Natural killer cell (primary cell): ENCODE measurements at regions of chr9 and their contacts with region 1.

Region 1: DNA sequence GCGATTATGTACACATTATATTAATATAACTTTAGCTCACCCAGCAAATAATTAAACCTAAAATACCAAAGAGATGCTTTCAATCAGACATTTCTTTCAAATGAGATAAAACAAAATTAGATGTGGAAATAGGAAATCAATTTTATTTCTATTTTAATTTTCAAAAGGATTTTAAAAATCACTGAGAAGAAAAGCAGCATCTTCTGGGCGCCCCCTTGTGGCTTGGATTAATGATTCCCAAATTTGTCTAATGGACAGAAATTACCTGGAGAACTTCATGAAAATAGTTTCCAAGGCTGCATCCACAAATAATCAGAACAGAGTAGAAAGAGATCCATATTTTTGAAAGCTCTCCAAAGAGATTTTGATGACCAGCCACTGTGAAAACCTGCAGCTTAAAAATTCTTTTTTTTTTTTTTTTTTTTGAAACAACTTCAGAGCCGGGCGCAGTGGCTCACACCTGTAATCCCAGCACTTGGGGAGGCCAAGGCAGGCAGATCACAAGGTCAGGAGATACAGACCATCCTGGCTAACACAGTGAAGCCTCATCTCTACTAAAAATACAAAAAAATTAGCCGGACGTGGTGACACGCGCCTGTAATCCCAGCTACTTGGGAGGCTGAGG is 50.9 kb upstream of the CEMIP2 start:
- DNase-seq: peak in 1 of 2 donors; percentile 80
- ATAC-seq: no peak
- H3K4me3 ChIP-seq: no peak overlapping the region
- H3K4me3 Mint-ChIP-seq: no peak overlapping the region
- H3K27ac ChIP-seq: no peak overlapping the region
- H3K27ac Mint-ChIP-seq: no peak overlapping the region
- H3K4me1 ChIP-seq: peaks cover 4% of the 10 kb centered on the region
- H3K4me1 Mint-ChIP-seq: peaks cover 10 to 15% of the 10 kb centered on the region in 2 donors
- H3K27me3 ChIP-seq: no peaks in the 10 kb centered on the region
- H3K27me3 Mint-ChIP-seq: no peaks in the 10 kb centered on the region
- CTCF ChIP-seq: peak; percentile 89

Region 2: GRCh38 chr9:71741711-71742648 is 77.2 kb before region 1 on chr9:
- intact Hi-C with region 1: loop called (anchors 5 kb)
- DNase-seq: no peak
- ATAC-seq: no peak
- H3K4me3 ChIP-seq: no peak overlapping the region
- H3K4me3 Mint-ChIP-seq: no peak overlapping the region
- H3K27ac ChIP-seq: no peak overlapping the region
- H3K27ac Mint-ChIP-seq: peak overlapping the region; percentile 21 to 72
- H3K4me1 ChIP-seq: no peaks in the 10 kb centered on the region
- H3K4me1 Mint-ChIP-seq: peaks cover 27% of the 10 kb centered on the region in 2 donors
- H3K27me3 ChIP-seq: no peaks in the 10 kb centered on the region
- H3K27me3 Mint-ChIP-seq: no peaks in the 10 kb centered on the region
- CTCF ChIP-seq: no peak

Region 3: DNA sequence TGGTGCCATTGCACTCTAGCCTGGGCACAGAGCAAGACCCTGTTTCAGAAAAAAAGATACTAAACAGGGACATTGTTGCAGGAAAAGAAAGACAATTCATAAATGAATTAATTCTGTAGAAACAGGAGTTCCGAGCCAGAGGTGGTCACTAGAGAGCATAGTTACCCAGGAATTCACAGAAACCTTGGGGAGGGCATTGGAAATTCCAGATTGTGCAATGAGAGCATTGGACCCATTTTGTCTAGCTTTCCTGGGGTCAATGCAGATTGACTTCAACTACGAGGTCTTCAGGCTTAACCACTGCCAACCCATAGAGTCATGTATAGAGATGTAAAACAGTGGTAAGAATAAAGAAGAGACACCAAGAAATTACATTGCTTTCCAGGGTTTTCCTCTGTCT is 28.7 kb after region 1 on chr9:
- intact Hi-C with region 1: no loop called
- DNase-seq: no peak
- ATAC-seq: no peak
- H3K4me3 ChIP-seq: no peak overlapping the region
- H3K4me3 Mint-ChIP-seq: no peak overlapping the region
- H3K27ac ChIP-seq: no peak overlapping the region
- H3K27ac Mint-ChIP-seq: no peak overlapping the region
- H3K4me1 ChIP-seq: no peaks in the 10 kb centered on the region
- H3K4me1 Mint-ChIP-seq: no peaks in the 10 kb centered on the region
- H3K27me3 ChIP-seq: no peaks in the 10 kb centered on the region
- H3K27me3 Mint-ChIP-seq: no peaks in the 10 kb centered on the region
- CTCF ChIP-seq: no peak

Region 4: DNA sequence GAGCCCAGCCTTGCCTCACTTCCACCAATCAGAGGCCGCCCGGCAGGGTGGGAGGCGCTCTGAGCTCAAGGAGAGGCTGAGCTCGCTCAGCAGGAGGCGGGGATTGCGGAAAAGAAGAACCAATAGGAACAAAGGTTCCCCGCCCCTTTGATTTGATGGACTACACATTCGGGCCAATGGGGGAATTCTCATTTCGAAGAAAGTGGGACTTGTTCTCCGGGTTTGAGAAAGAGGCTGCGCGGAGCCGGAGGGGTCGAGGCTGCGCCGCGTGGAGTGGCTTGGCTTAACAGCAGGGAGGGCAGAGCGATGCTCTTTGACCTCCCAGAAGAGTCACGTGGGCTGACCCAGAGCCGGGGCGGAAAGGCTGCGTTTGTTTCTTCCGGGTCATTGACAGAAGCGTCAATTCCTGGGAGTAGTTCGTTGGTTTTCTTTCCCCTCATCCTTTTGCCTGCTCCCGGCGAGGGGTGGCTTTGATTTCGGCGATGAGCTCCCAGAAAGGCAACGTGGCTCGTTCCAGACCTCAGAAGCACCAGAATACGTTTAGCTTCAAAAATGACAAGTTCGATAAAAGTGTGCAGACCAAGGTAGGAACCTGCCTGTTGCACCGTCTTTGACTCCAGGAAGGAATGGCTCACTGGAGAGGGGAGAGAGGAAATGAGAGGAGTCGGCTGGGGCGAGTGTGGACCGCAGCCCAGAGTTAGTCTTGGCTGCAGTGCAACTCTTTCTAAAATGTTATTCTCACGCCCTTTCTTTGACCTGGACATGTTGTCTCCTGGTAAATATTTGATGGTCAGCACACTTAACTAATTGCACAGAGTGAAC is 92.2 kb after region 1 on chr9 and contains the start of gene C9orf85:
- intact Hi-C with region 1: no loop called
- DNase-seq: peak; percentile 94 to 98
- ATAC-seq: peak; percentile 90 to 98 (median 91)
- H3K4me3 ChIP-seq: peak within 1 kb of the TSS; percentile 62
- H3K4me3 Mint-ChIP-seq: peak within 1 kb of the TSS; percentile 100
- H3K27ac ChIP-seq: peak within 1 kb of the TSS; percentile 80
- H3K27ac Mint-ChIP-seq: peak within 1 kb of the TSS; percentile 97
- H3K4me1 ChIP-seq: peaks cover 12% of the 10 kb centered on the region
- H3K4me1 Mint-ChIP-seq: peaks cover 61 to 70% of the 10 kb centered on the region in 2 donors
- H3K27me3 ChIP-seq: no peaks in the 10 kb centered on the region
- H3K27me3 Mint-ChIP-seq: no peaks in the 10 kb centered on the region
- CTCF ChIP-seq: no peak
- total RNA-seq, gene C9orf85: 5.6 to 11.1 (median 9.2) TPM

Region 5: DNA sequence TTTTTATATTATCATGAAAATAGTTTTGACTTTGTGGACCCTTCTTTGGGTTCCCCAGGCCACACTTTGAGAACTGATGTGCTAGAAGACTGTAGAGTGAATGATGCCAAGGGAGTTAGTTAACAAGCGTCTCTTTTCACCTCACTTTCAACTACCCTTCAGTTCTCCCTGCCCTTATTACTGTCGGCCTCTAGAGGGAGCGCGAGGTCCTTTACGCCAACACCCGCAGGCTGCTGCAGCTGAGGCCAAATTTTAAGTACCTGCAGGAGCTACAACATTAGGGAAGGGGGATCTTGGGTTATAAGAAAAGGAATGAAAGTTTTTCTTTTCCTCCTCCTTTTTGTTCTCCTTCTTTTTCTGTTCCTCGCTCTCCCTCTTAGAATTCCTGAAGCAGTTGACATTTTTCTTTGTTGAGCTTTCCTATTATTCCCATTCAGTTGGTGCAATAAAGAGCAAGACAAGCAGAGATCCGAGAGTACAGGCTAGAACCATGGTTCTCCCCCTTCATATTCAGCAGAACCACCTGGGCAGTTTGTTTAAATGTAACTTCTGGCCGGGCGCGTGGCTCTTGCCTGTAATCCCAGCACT is 461.8 kb after region 1 on chr9:
- intact Hi-C with region 1: no loop called
- DNase-seq: peak; percentile 66 to 87
- ATAC-seq: peak; percentile 87 to 99 (median 99)
- H3K4me3 ChIP-seq: no peak overlapping the region
- H3K4me3 Mint-ChIP-seq: no peak overlapping the region
- H3K27ac ChIP-seq: no peak overlapping the region
- H3K27ac Mint-ChIP-seq: no peak overlapping the region
- H3K4me1 ChIP-seq: no peaks in the 10 kb centered on the region
- H3K4me1 Mint-ChIP-seq: no peaks in the 10 kb centered on the region
- H3K27me3 ChIP-seq: no peaks in the 10 kb centered on the region
- H3K27me3 Mint-ChIP-seq: peaks cover 0 to 2% of the 10 kb centered on the region in 2 donors
- CTCF ChIP-seq: peak; percentile 98